ENCODE measurements at regions of chr15 and their contacts with region 1.

Region 1: DNA sequence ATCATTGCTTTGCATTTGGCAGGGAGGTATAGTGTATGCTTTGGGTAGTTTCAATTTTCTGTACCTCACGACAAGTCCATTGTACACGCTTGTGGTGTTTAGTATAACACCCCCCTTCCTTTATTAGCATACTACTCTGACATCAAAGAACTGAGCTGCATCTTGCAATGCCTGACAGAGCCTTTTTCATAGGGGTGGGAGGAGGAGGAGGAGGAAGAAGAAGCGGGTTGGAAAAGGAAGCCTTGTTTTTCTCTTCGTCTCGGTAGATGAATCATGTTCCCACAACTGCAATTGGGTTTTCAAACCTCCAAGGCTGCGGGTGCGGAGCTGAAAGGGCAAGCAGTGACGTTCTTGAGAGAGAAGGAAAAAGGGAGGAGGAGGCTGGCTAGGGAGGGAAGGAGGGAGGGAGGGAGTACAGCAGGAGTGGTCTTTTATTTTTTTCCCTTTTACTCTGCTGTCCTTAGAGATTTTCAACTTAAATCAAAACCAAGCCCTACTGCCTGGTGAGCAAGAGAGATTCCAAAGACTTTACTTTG is 175.7 kb downstream of the KLHL25 start:
- DNase-seq: peak in 8 of 9 experiments; percentile 30 to 82 (median 59)
- ATAC-seq: peak; percentile 84
- H3K4me3 ChIP-seq: peak overlapping the region in 1 of 2 experiments; percentile 27
- H3K4me3 Mint-ChIP-seq: no peak overlapping the region
- H3K27ac ChIP-seq: peak overlapping the region in 1 of 2 experiments; percentile 58
- H3K27ac Mint-ChIP-seq: no peak overlapping the region
- H3K4me1 ChIP-seq: peaks cover 38% of the 10 kb centered on the region
- H3K4me1 Mint-ChIP-seq: peaks cover 32% of the 10 kb centered on the region
- H3K27me3 ChIP-seq: no peaks in the 10 kb centered on the region
- H3K27me3 Mint-ChIP-seq: no peaks in the 10 kb centered on the region
- CTCF ChIP-seq: no peak

Region 2: DNA sequence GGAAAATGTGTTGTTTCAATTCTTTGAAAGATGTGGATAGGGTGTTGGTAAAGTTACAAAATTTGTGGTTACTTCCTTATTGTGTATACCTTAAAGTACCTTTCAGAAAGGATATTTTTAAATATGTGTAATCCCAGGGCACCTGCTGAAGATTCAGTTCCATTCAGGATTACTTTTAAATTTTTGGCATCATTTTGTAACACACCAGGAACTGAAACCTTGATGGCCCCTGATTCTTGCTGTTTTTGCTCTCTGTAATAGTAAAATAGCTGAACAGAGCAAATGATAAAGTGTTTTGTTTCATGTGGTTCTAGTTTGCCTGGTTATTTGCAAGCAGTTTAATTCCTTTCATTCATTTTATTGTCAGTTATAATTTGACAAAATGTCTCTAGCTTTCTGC is 14.8 kb after region 1 on chr15:
- CTCF ChIA-PET with region 1: no interaction called
- POLR2A ChIA-PET with region 1: no interaction called
- intact Hi-C with region 1: loop called in 1 of 2 experiments (anchors 2 kb)
- DNase-seq: no peak
- ATAC-seq: no peak
- H3K4me3 ChIP-seq: no peak overlapping the region
- H3K4me3 Mint-ChIP-seq: no peak overlapping the region
- H3K27ac ChIP-seq: no peak overlapping the region
- H3K27ac Mint-ChIP-seq: no peak overlapping the region
- H3K4me1 ChIP-seq: peaks cover 3% of the 10 kb centered on the region
- H3K4me1 Mint-ChIP-seq: peaks cover 30% of the 10 kb centered on the region
- H3K27me3 ChIP-seq: no peaks in the 10 kb centered on the region
- H3K27me3 Mint-ChIP-seq: no peaks in the 10 kb centered on the region
- CTCF ChIP-seq: no peak

Region 3: GRCh38 chr15:85897926-85898278 is 278.9 kb after region 1 on chr15:
- CTCF ChIA-PET with region 1: no interaction called
- POLR2A ChIA-PET with region 1: no interaction called
- intact Hi-C with region 1: no loop called
- DNase-seq: no peak
- ATAC-seq: no peak
- H3K4me3 ChIP-seq: no peak overlapping the region
- H3K4me3 Mint-ChIP-seq: no peak overlapping the region
- H3K27ac ChIP-seq: no peak overlapping the region
- H3K27ac Mint-ChIP-seq: no peak overlapping the region
- H3K4me1 ChIP-seq: no peaks in the 10 kb centered on the region
- H3K4me1 Mint-ChIP-seq: no peaks in the 10 kb centered on the region
- H3K27me3 ChIP-seq: peaks cover 0 to 3% of the 10 kb centered on the region in 2 experiments
- H3K27me3 Mint-ChIP-seq: peaks cover 44% of the 10 kb centered on the region
- CTCF ChIP-seq: no peak

Measured in CD8-positive, alpha-beta T cell (primary cell).